CD8-positive, alpha-beta memory T cell (primary cell): ENCODE measurements at regions of chr4 and their contacts with region 1.

Region 1: DNA sequence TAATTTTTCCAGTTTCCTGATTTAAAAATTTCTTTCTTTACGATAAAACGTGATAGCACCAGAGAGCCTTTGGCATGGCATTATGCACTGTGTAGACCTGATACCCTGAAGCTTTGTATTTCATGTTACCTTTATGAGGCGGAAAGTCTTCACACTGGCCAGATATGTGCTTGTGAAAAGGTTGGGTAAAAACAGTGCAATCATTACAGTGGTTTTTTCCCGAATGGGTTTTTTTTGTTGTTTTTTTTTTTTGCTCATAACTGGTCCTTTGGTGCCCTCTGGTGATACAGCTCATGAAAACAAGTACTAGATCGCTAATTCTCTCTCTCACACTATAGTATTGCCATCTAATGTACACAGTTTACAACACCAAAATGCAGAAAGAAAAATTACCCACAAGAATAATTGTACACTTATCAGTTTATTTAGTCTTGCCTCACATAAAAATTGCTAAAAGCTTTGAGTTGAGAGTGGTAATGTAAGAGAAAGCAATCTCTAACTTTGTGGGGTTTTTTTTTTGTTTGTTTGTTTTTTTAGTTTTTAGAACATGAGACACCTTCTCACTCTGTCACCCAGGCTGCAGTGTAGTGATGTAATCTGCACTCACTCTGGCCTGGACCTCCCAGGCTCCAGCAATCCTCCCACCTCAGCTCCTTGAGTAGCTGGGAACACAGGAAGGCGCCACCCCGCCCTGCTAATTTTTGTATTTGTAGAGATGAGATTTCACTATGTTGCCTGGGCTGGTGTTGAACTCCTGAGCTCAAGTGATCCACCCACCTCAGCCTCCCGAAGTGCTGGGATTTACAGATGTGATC is 21.3 kb downstream of the SPCS3 start:
- DNase-seq: peak in 2 of 5 donors; percentile 25 to 26
- H3K4me3 ChIP-seq: no peak overlapping the region
- H3K4me3 Mint-ChIP-seq: no peak overlapping the region
- H3K27ac ChIP-seq: no peak overlapping the region
- H3K27ac Mint-ChIP-seq: peak overlapping the region in 2 of 8 donors; percentile 40 to 52
- H3K4me1 ChIP-seq: no peaks in the 10 kb centered on the region
- H3K4me1 Mint-ChIP-seq: peaks cover 9 to 23% (median 21%) of the 10 kb centered on the region in 3 donors
- H3K27me3 ChIP-seq: no peaks in the 10 kb centered on the region
- H3K27me3 Mint-ChIP-seq: no peaks in the 10 kb centered on the region

Region 2: GRCh38 chr4:176320340-176320975 is 20.6 kb before region 1 on chr4:
- CTCF ChIA-PET with region 1: interaction called, 10 read pairs
- POLR2A ChIA-PET with region 1: no interaction called
- DNase-seq: peak; percentile 85 to 90 (median 87)
- H3K4me3 ChIP-seq: peak overlapping the region; percentile 86
- H3K4me3 Mint-ChIP-seq: peak overlapping the region; percentile 87 to 98 (median 91)
- H3K27ac ChIP-seq: peak overlapping the region; percentile 95
- H3K27ac Mint-ChIP-seq: peak overlapping the region; percentile 85 to 99 (median 97)
- H3K4me1 ChIP-seq: peaks cover 47% of the 10 kb centered on the region
- H3K4me1 Mint-ChIP-seq: peaks cover 54 to 71% (median 65%) of the 10 kb centered on the region in 3 donors
- H3K27me3 ChIP-seq: no peaks in the 10 kb centered on the region
- H3K27me3 Mint-ChIP-seq: no peaks in the 10 kb centered on the region